ENCODE measurements at regions of chr3 and their contacts with region 1.

Region 1: DNA sequence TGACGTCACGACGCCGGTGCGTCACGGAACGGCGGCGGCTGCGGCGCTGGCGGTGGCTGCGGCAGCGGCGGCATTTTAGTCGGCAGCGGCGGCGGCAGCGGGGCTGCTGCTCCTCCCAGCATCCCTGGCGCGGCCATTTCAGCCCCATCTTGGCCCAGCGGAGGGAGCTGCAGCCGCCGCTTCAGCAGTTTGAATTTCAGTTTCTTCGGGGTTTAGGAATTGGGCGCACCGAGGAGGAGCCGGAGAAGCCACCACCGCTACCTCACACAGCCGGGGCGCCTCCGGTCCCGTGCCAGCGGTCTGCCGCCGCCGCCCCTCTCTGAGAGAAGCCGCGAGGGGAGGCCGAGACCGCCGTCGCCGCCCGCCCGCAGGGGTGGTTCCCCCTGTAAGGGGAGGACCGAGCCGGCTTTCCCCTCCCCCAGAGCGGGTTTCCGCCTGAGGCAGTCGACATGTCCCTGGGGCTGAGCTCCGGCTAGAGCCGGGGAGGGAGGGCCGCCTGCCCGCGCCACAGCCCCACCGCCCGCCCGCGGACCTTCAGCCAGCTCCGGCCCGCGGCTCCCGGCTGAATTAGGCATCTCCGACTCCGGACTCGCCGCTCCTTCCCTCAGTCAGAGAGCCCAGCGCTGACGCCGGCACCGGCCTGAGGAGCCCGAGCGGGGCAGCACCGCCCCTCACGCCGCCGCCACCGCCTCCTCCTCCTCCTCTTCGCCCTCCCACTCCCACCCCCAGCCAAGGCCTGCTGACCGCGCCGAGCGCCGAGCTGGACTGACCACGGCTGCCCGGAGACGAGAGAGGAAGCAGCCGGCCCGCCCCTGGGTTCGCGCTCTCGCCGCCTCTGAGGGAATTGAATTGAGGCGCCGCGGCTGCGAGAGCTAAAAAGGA is at the start of gene TSC22D2:
- DNase-seq: peak; percentile 97 to 98
- ATAC-seq: peak; percentile 74 to 82 (median 78)
- H3K4me3 ChIP-seq: peak within 1 kb of the TSS; percentile 88
- H3K27ac ChIP-seq: peak within 1 kb of the TSS; percentile 99
- H3K4me1 ChIP-seq: peaks cover 16% of the 10 kb centered on the region
- H3K27me3 ChIP-seq: no peaks in the 10 kb centered on the region
- CTCF ChIP-seq: peak; percentile 14
- total RNA-seq, gene TSC22D2: 29.7 to 63.6 (median 36.2) TPM

Region 2: DNA sequence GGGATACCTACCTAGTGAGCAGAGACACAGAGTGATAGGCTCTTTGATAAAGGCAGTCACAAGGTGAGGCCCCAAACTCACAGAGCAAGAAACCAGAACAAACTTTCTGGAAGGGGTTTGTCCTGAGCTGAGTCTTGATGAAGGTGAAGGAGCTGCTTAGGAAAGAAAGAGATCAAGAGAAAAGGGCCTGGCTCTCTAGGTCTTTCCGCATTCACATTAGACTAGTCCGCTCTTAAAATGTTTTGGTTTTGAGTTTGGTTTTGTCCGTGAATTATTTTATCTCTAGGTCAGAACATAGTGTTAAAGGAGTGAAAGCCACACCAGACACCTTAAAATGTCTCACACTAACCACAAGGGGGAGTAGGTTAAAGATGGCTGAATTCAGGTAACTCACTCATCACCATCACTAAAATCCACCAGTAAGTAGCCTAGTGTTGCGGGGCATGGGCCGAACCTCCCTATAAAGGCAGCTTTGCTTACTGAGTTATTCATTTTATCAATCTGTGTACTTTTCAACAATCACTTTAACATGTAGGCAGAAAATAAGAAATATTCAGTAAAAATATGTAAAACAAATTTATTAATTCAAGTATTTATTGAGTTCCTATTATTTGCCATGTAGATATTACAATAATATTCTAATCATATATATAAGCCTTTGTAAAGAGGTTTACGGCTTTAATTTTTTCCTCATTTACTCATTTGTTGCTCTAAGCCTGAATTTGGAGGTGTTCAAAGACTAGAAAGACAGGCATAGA is 121.9 kb before region 1 on chr3:
- intact Hi-C with region 1: loop called in 1 of 2 experiments (anchors 2 kb)
- DNase-seq: no peak
- ATAC-seq: peak; percentile 65 to 80 (median 70)
- H3K4me3 ChIP-seq: no peak overlapping the region
- H3K27ac ChIP-seq: no peak overlapping the region
- H3K4me1 ChIP-seq: no peaks in the 10 kb centered on the region
- H3K27me3 ChIP-seq: no peaks in the 10 kb centered on the region
- CTCF ChIP-seq: peak; percentile 63

Region 3: GRCh38 chr3:150371741-150372254 is 36.7 kb before region 1 on chr3:
- intact Hi-C with region 1: loop called in 1 of 2 experiments (anchors 5 kb)
- DNase-seq: no peak
- ATAC-seq: peak; percentile 86 to 92 (median 90)
- H3K4me3 ChIP-seq: peak overlapping the region; percentile 58
- H3K27ac ChIP-seq: peak overlapping the region; percentile 83
- H3K4me1 ChIP-seq: peaks cover 31% of the 10 kb centered on the region
- H3K27me3 ChIP-seq: no peaks in the 10 kb centered on the region
- CTCF ChIP-seq: no peak

Region 4: GRCh38 chr3:150469031-150469942 is 60.8 kb after region 1 on chr3:
- intact Hi-C with region 1: loop called in 1 of 2 experiments (anchors 5 kb)
- DNase-seq: peak; percentile 61 to 70
- ATAC-seq: peak; percentile 96 to 99 (median 99)
- H3K4me3 ChIP-seq: no peak overlapping the region
- H3K27ac ChIP-seq: peak overlapping the region; percentile 70
- H3K4me1 ChIP-seq: peaks cover 11% of the 10 kb centered on the region
- H3K27me3 ChIP-seq: no peaks in the 10 kb centered on the region
- CTCF ChIP-seq: no peak

Region 5: GRCh38 chr3:150546226-150547044 is 138.0 kb after region 1 on chr3 and contains the starts of genes EIF2A and SERP1:
- intact Hi-C with region 1: loop called in 1 of 2 experiments (anchors 2 kb)
- DNase-seq: peak; percentile 98 to 100
- ATAC-seq: peak; percentile 93 to 95 (median 94)
- H3K4me3 ChIP-seq: peak within 1 kb of the TSS; percentile 85
- H3K27ac ChIP-seq: peak within 1 kb of the TSS; percentile 97
- H3K4me1 ChIP-seq: peaks cover 39% of the 10 kb centered on the region
- H3K27me3 ChIP-seq: no peaks in the 10 kb centered on the region
- CTCF ChIP-seq: no peak
- total RNA-seq, gene EIF2A: 67.2 to 103 (median 91.2) TPM
- total RNA-seq, gene SERP1: 16.3 to 22.5 (median 18.7) TPM

Region 6: GRCh38 chr3:150635526-150635925 is 227.1 kb after region 1 on chr3:
- intact Hi-C with region 1: no loop called
- DNase-seq: no peak
- ATAC-seq: no peak
- H3K4me3 ChIP-seq: no peak overlapping the region
- H3K27ac ChIP-seq: no peak overlapping the region
- H3K4me1 ChIP-seq: no peaks in the 10 kb centered on the region
- H3K27me3 ChIP-seq: no peaks in the 10 kb centered on the region
- CTCF ChIP-seq: no peak

Region 7: DNA sequence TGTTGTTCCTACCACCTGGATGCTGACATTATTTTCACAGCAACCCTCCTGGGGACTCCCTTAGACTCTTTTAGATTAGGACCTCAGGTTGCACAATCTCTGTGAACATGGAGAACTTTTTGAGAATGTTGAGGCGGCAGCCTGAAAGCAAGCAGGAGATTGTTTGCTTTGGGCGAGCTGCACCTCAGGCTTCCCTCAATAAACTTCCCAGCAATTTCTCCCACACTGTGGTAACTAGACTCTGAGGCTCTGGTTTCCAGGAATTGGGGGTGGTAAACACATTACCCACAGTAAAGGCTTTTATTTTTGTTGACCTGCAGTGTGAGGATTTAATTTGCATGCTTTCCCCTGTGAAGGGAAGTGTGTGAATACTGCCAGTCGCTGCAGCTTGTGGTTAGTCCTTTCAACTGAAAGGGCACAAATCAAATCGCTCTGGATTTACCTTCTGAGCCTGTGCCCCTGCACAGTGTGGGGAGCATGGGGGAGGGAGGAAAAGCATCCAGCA is 389.7 kb after region 1 on chr3:
- intact Hi-C with region 1: no loop called
- DNase-seq: no peak
- ATAC-seq: no peak
- H3K4me3 ChIP-seq: no peak overlapping the region
- H3K27ac ChIP-seq: no peak overlapping the region
- H3K4me1 ChIP-seq: no peaks in the 10 kb centered on the region
- H3K27me3 ChIP-seq: peaks cover 0 to 6% (median 0%) of the 10 kb centered on the region in 3 donors
- CTCF ChIP-seq: no peak

Region 8: GRCh38 chr3:150913133-150913922 is 504.9 kb after region 1 on chr3:
- intact Hi-C with region 1: no loop called
- DNase-seq: no peak
- ATAC-seq: peak; percentile 79 to 90 (median 86)
- H3K4me3 ChIP-seq: no peak overlapping the region
- H3K27ac ChIP-seq: no peak overlapping the region
- H3K4me1 ChIP-seq: peaks cover 3% of the 10 kb centered on the region
- H3K27me3 ChIP-seq: peaks cover 0 to 3% (median 2%) of the 10 kb centered on the region in 3 donors
- CTCF ChIP-seq: no peak